Motor neuron (in vitro differentiated cells): ENCODE measurements at regions of chr6 and their contacts with region 1.

Region 1: DNA sequence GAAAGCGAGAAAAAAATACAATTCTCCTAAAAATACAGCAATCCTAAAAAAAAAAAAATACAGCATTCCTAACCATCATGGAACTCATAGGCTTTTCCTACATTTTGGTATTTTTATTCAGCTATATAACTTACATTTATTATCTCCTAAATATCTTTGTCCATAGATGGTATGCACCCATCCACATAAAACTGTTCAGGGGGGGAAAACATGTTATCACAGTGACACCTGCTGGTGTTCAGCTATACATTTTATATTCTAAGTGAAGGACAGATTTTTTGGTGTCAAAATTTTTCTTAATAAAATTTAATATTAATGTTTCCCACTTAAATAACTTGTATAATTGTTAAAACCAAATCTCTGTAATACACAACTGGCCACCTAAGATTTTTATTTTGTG is 58.0 kb downstream of the BLOC1S5 start:
- ATAC-seq: peak in 2 of 8 experiments; percentile 28 to 44
- H3K4me3 ChIP-seq: no peak overlapping the region
- H3K27ac ChIP-seq: no peak overlapping the region
- H3K4me1 ChIP-seq: no peaks in the 10 kb centered on the region

Region 2: DNA sequence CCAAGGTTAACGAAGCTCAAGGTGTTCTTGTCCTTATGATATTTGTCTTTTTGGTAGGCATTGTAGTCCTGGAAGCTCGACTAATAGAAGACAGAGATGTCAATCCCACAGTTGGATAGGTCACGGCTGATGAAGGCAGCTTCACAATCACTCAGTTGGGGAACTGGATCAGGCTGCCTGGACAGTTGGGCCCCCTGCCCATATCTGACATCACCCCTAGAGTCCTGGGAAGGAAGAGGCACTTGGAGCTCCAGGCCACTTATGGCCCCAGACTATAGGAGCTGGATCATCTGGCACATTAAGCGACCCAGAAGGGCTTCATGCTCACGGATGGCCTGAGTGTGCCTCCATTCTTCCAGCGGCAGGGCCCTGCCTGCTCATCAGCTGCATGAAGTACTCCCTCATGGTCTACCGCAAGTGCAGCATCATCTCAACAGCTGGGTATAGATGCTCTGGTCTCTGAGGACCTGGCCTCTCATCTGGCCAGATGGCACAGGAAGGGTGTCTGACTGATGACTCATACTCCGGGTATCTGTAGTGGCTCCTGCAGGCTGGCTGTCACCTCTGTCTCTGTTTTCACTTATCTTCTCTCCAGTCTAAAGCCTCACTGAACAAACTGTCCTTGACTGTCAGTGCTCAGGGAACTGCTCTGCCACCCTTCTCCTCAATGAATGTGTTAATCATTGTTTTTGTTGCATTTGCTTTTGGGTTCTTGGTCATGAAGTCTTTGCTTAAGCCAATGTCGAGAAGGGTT is 664.0 kb before region 1 on chr6:
- in situ Hi-C with region 1: no loop called
- ATAC-seq: peak in 2 of 8 experiments; percentile 10 to 37
- H3K4me3 ChIP-seq: no peak overlapping the region
- H3K27ac ChIP-seq: no peak overlapping the region
- H3K4me1 ChIP-seq: no peaks in the 10 kb centered on the region

Region 3: GRCh38 chr6:7725849-7726415 is 280.3 kb before region 1 on chr6 and contains the start of gene BMP6:
- in situ Hi-C with region 1: loop called in 2 of 9 experiments (anchors 25 kb)
- ATAC-seq: peak; percentile 73 to 88 (median 78)
- H3K4me3 ChIP-seq: peak within 1 kb of the TSS; percentile 41 to 49 (median 43)
- H3K27ac ChIP-seq: no peak within 1 kb of the TSS
- H3K4me1 ChIP-seq: peaks cover 0 to 9% of the 10 kb centered on the region in 2 donors
- total RNA-seq, gene BMP6: 0.51 to 10.9 (median 1.1) TPM